Activated naive CD4-positive, alpha-beta T cell treated with anti-CD3 and anti-CD28 coated beads for 36 hours (primary cell): ENCODE measurements at regions of chr3 and their contacts with region 1.

Region 1: GRCh38 chr3:88219138-88219792 is 69.5 kb downstream of the C3orf38 start:
- DNase-seq: peak; percentile 55
- H3K4me3 Mint-ChIP-seq: no peak overlapping the region
- H3K27ac Mint-ChIP-seq: no peak overlapping the region
- H3K4me1 Mint-ChIP-seq: no peaks in the 10 kb centered on the region
- H3K27me3 Mint-ChIP-seq: peaks cover 4% of the 10 kb centered on the region

Region 2: DNA sequence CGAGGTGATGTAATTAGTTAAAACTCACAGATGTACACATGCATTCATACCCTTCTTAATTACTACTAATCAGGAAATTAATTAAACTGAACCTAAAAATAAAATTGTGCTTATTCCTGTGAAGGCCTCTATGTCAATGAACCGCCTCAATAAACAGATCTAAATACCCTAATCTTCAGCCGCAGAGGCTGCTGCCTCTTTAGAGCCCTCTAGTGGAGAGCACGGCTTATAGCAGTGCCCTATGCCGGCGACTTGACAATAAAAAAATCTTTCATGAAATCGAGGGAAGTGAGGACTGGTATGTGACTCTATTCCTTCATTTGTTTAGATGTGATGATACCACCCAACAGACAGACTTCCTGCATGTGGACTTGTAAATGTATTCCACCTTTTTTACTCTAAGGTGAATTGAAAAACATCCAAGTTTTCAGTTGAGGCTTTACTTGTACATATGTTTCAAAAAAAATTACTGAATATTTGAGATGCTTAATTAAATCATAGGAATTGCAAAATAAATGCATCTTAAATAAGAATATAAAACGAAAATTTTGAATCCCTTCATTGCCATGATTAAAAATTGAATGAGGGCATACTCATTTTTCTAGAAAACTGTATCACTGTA is 879.8 kb after region 1 on chr3:
- CTCF ChIA-PET with region 1: no interaction called
- intact Hi-C with region 1: loop called (anchors 1 kb)
- DNase-seq: peak; percentile 55
- H3K4me3 Mint-ChIP-seq: no peak overlapping the region
- H3K27ac Mint-ChIP-seq: no peak overlapping the region
- H3K4me1 Mint-ChIP-seq: no peaks in the 10 kb centered on the region
- H3K27me3 Mint-ChIP-seq: peaks cover 2% of the 10 kb centered on the region

Region 3: DNA sequence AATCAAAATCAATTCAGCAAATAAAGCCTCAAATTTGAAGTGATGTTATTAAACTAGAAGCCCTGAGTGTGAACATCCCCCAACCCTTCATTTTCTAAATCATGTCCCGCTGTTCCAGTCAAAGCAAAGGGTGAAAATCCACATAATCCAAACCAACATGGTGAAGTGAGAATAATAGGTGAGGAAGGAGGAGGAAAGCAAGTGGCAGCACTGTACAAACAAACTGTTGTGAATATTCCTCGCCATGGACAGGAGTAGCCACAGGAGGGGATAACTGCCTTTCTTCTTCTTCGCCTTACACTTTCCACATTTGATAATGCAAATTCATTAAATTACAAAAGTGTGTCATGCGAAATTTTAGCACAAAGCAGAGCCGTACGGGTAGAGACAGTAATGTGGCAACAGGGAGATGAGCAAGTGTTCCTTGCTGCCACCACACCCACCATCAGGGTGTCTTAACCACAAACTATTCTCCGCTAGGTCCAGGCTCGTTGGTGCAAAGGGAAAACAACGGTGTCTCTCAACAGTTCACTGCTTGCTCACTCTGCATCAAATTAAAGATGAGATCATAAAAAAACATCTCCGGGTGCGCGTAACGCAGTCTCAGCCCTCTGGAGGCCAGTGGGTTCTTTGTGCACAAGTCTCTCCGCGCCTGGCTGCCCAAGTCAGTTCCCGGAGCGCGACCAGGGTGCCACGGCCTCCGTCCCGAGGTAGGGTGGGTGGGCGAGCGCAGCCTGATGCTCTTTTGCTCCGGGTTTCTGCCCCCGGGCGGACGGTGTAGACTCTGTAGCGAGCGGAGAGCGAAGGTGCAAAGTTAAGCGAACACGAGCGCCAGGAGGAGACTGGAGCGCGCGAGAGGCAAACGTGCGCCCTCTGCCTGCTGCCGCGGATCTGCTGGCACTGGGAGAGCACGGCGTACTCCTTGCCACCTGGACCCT is 894.9 kb after region 1 on chr3:
- CTCF ChIA-PET with region 1: no interaction called
- intact Hi-C with region 1: loop called (anchors 1 kb)
- DNase-seq: peak; percentile 62
- H3K4me3 Mint-ChIP-seq: peak overlapping the region; percentile 59
- H3K27ac Mint-ChIP-seq: no peak overlapping the region
- H3K4me1 Mint-ChIP-seq: peaks cover 2% of the 10 kb centered on the region
- H3K27me3 Mint-ChIP-seq: peaks cover 27% of the 10 kb centered on the region

Region 4: DNA sequence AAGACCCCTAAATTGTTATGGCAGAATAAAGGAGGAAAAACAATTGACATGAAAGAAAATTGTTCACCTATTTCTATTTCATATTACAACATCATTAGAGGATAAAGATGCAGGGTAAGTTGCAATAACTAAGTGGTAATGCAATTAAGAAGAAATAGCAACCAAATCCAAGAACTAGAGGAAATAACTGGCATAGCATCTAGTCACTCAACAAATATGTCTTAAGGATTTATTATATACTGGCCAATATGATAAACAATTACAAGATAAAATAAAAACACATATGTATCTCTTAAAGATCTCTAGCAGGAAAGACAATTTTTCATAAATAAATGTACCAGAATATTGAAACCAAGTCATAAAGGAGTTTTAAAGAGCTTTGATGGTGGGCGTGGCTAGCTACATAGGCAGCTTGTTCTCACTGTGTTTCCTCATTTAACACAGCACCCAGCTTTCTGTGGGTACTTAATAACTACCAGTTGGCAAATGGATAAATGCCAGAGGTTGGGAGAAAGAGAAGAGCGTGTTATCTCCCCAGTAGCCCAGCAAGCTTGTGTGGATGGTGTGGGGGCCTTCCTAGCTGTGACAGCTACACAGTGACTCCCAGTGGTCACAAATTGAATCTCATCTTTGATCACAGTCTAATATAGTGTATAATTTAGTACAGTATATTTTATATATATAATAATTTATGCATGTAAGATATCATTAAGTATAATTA is 1872.1 kb after region 1 on chr3:
- CTCF ChIA-PET with region 1: no interaction called
- intact Hi-C with region 1: loop called (anchors 5 kb)
- DNase-seq: no peak
- H3K4me3 Mint-ChIP-seq: no peak overlapping the region
- H3K27ac Mint-ChIP-seq: no peak overlapping the region
- H3K4me1 Mint-ChIP-seq: no peaks in the 10 kb centered on the region
- H3K27me3 Mint-ChIP-seq: no peaks in the 10 kb centered on the region